ENCODE measurements at regions of chr20 and their contacts with region 1.

Region 1: GRCh38 chr20:22684072-22684762 is 99.8 kb upstream of the FOXA2 start:
- DNase-seq: peak; percentile 56
- ATAC-seq: peak; percentile 94
- H3K4me3 ChIP-seq: no peak overlapping the region
- H3K27ac ChIP-seq: no peak overlapping the region
- H3K4me1 ChIP-seq: peaks cover 4% of the 10 kb centered on the region
- H3K27me3 ChIP-seq: no peaks in the 10 kb centered on the region
- CTCF ChIP-seq: peak; percentile 89

Region 2: GRCh38 chr20:22333885-22334545 is 350.2 kb before region 1 on chr20:
- CTCF ChIA-PET with region 1: interaction called, 10 read pairs
- POLR2A ChIA-PET with region 1: no interaction called
- in situ Hi-C with region 1: no loop called
- intact Hi-C with region 1: loop called (anchors 1 kb)
- DNase-seq: no peak
- ATAC-seq: no peak; the same call in none of the 2 replicates
- H3K4me3 ChIP-seq: no peak overlapping the region
- H3K27ac ChIP-seq: no peak overlapping the region
- H3K4me1 ChIP-seq: no peaks in the 10 kb centered on the region
- H3K27me3 ChIP-seq: peaks cover 6% of the 10 kb centered on the region; the same call in 1 of the 2 replicates
- CTCF ChIP-seq: peak; percentile 91

Region 3: DNA sequence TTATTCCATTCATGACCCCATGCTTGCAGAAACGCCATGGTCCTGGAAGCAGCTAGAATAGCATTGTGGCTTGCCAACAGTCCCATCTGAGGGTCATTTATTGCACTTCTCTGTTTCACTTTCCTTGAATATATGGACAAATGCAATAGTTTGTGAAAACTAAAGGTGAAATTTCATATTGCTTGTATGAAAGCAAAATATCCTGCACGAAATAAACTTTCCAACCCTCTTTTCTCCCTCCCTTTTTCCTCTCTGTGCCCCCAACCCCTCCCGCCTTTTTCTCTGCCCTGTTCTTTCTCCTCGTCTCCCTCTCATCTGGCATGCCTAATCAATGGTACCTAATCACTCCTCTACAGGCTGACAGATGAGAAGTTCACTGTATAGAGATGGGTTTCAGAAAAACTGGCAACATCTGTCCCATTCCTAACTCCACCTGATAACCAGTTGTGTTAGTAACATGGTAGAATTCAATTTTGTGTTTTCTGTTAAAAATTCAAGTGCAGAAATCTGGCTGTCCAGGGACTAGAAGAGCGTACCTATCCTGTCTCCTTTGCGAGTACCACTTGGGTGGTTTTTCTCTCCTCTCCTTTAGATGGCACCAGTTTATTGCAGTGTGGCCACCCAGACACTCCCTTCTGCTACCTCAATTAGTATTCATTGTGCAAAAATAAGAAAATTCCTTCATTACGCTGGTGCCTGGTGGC is 298.5 kb before region 1 on chr20:
- CTCF ChIA-PET with region 1: no interaction called
- POLR2A ChIA-PET with region 1: no interaction called
- in situ Hi-C with region 1: no loop called
- intact Hi-C with region 1: loop called (anchors 5 kb)
- DNase-seq: no peak
- ATAC-seq: peak; percentile 73
- H3K4me3 ChIP-seq: no peak overlapping the region
- H3K27ac ChIP-seq: peak overlapping the region; percentile 58; the same call in 1 of the 2 replicates
- H3K4me1 ChIP-seq: peaks cover 33% of the 10 kb centered on the region
- H3K27me3 ChIP-seq: no peaks in the 10 kb centered on the region
- CTCF ChIP-seq: peak; percentile 84

Region 4: DNA sequence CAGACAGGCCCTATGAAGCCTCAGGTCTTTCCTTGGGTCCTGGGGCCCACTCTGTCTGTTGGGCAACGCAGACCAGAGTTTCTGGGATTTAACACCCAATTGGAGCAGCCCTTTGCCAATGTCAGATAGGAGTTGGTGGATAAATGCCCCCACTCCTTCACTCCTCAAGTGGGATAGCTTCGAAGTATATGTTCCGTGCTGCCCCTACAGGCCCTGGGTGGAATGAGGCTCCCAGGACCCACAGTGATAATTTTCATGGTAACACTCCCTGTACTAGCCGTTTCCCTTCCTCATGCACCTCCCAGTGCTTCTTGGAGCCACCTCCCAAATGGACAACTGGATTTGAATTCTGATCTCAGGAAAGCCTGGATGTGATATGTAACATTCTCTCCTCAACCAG is 245.3 kb before region 1 on chr20:
- CTCF ChIA-PET with region 1: no interaction called
- POLR2A ChIA-PET with region 1: no interaction called
- in situ Hi-C with region 1: no loop called
- intact Hi-C with region 1: no loop called
- DNase-seq: no peak
- ATAC-seq: peak; percentile 87
- H3K4me3 ChIP-seq: no peak overlapping the region
- H3K27ac ChIP-seq: peak overlapping the region; percentile 34; the same call in 1 of the 2 replicates
- H3K4me1 ChIP-seq: no peaks in the 10 kb centered on the region; the same call in 1 of the 2 replicates
- H3K27me3 ChIP-seq: no peaks in the 10 kb centered on the region
- CTCF ChIP-seq: peak; percentile 66

Region 5: GRCh38 chr20:22453239-22454080 is 230.8 kb before region 1 on chr20:
- CTCF ChIA-PET with region 1: no interaction called
- POLR2A ChIA-PET with region 1: no interaction called
- in situ Hi-C with region 1: no loop called
- intact Hi-C with region 1: loop called (anchors 10 kb)
- DNase-seq: no peak
- ATAC-seq: no peak
- H3K4me3 ChIP-seq: no peak overlapping the region
- H3K27ac ChIP-seq: no peak overlapping the region
- H3K4me1 ChIP-seq: no peaks in the 10 kb centered on the region
- H3K27me3 ChIP-seq: no peaks in the 10 kb centered on the region
- CTCF ChIP-seq: peak; percentile 88

Region 6: GRCh38 chr20:22586645-22587310 is 97.4 kb before region 1 on chr20:
- CTCF ChIA-PET with region 1: interaction called, 5 read pairs
- POLR2A ChIA-PET with region 1: no interaction called
- in situ Hi-C with region 1: no loop called
- intact Hi-C with region 1: loop called (anchors 2 kb)
- DNase-seq: no peak
- ATAC-seq: peak; percentile 45
- H3K4me3 ChIP-seq: peak overlapping the region; percentile 46 to 70
- H3K27ac ChIP-seq: peak overlapping the region; percentile 69
- H3K4me1 ChIP-seq: peaks cover 3% of the 10 kb centered on the region
- H3K27me3 ChIP-seq: peaks cover 2% of the 10 kb centered on the region; the same call in 1 of the 2 replicates
- CTCF ChIP-seq: peak; percentile 97

Region 7: DNA sequence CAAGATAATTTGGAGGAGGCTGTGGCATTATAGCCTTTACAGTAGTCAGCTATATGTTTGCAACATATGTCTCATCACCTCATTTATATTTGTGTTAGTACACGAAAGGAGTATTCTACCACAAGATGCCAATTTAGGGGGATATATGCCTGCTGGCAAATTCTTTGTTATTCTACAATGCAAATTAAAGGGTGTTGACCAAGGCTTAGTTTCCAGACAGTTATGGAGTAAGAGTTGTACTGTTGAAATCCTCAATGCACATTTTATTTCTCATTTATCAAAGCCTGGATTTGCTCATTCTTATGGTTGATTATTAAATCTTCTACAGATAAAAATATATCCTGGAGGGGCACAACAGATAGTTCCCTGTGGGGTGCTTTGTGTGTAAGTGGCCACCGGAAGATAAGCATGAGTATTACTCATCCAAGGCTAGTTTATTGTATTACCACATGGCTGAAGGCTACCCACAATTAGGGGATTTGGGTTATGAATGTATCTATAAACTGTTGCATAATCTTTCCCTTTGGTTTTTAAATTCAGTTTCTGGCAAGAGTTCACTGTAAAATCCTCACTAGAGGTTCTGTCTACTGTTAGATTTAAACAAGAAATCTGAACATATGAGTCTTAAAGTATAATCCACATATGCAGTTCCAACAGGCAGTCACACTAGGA is 912.5 kb after region 1 on chr20:
- CTCF ChIA-PET with region 1: no interaction called
- POLR2A ChIA-PET with region 1: no interaction called
- in situ Hi-C with region 1: no loop called
- intact Hi-C with region 1: no loop called
- DNase-seq: no peak
- ATAC-seq: no peak
- H3K4me3 ChIP-seq: no peak overlapping the region
- H3K27ac ChIP-seq: no peak overlapping the region
- H3K4me1 ChIP-seq: no peaks in the 10 kb centered on the region
- H3K27me3 ChIP-seq: peaks cover 2% of the 10 kb centered on the region; the same call in 1 of the 2 replicates
- CTCF ChIP-seq: no peak